Activated naive CD4-positive, alpha-beta T cell treated with anti-CD3 and anti-CD28 coated beads for 36 hours (primary cell): ENCODE measurements at regions of chr14 and their contacts with region 1.

Region 1: GRCh38 chr14:50860478-50861086 is 11.3 kb upstream of the ABHD12B start:
- DNase-seq: peak; percentile 96
- H3K4me3 Mint-ChIP-seq: peak overlapping the region; percentile 80
- H3K27ac Mint-ChIP-seq: peak overlapping the region; percentile 36
- H3K4me1 Mint-ChIP-seq: peaks cover 10% of the 10 kb centered on the region
- H3K27me3 Mint-ChIP-seq: no peaks in the 10 kb centered on the region

Region 2: GRCh38 chr14:50542941-50543418 is 317.6 kb before region 1 on chr14:
- CTCF ChIA-PET with region 1: interaction called, 15 read pairs
- intact Hi-C with region 1: loop called (anchors 1 kb)
- DNase-seq: peak; percentile 54
- H3K4me3 Mint-ChIP-seq: no peak overlapping the region
- H3K27ac Mint-ChIP-seq: no peak overlapping the region
- H3K4me1 Mint-ChIP-seq: peaks cover 8% of the 10 kb centered on the region
- H3K27me3 Mint-ChIP-seq: no peaks in the 10 kb centered on the region

Region 3: GRCh38 chr14:50726372-50727107 is 134.0 kb before region 1 on chr14:
- CTCF ChIA-PET with region 1: interaction called, 8 read pairs
- intact Hi-C with region 1: loop called (anchors 1 kb)
- DNase-seq: peak; percentile 48
- H3K4me3 Mint-ChIP-seq: peak overlapping the region; percentile 3
- H3K27ac Mint-ChIP-seq: peak overlapping the region; percentile 83
- H3K4me1 Mint-ChIP-seq: peaks cover 28% of the 10 kb centered on the region
- H3K27me3 Mint-ChIP-seq: no peaks in the 10 kb centered on the region

Region 4: GRCh38 chr14:50785457-50786063 is 75.0 kb before region 1 on chr14:
- CTCF ChIA-PET with region 1: interaction called, 143 read pairs
- intact Hi-C with region 1: loop called (anchors 1 kb)
- DNase-seq: no peak
- H3K4me3 Mint-ChIP-seq: no peak overlapping the region
- H3K27ac Mint-ChIP-seq: no peak overlapping the region
- H3K4me1 Mint-ChIP-seq: peaks cover 66% of the 10 kb centered on the region
- H3K27me3 Mint-ChIP-seq: no peaks in the 10 kb centered on the region

Region 5: GRCh38 chr14:50823051-50823761 is 37.4 kb before region 1 on chr14:
- CTCF ChIA-PET with region 1: interaction called, 11 read pairs
- intact Hi-C with region 1: loop called (anchors 2 kb)
- DNase-seq: peak; percentile 30
- H3K4me3 Mint-ChIP-seq: peak overlapping the region; percentile 59
- H3K27ac Mint-ChIP-seq: peak overlapping the region; percentile 73
- H3K4me1 Mint-ChIP-seq: peaks cover 89% of the 10 kb centered on the region
- H3K27me3 Mint-ChIP-seq: no peaks in the 10 kb centered on the region

Region 6: GRCh38 chr14:51014086-51014485 is 153.5 kb after region 1 on chr14:
- CTCF ChIA-PET with region 1: no interaction called
- intact Hi-C with region 1: no loop called
- DNase-seq: no peak
- H3K4me3 Mint-ChIP-seq: no peak overlapping the region
- H3K27ac Mint-ChIP-seq: no peak overlapping the region
- H3K4me1 Mint-ChIP-seq: no peaks in the 10 kb centered on the region
- H3K27me3 Mint-ChIP-seq: no peaks in the 10 kb centered on the region

Region 7: DNA sequence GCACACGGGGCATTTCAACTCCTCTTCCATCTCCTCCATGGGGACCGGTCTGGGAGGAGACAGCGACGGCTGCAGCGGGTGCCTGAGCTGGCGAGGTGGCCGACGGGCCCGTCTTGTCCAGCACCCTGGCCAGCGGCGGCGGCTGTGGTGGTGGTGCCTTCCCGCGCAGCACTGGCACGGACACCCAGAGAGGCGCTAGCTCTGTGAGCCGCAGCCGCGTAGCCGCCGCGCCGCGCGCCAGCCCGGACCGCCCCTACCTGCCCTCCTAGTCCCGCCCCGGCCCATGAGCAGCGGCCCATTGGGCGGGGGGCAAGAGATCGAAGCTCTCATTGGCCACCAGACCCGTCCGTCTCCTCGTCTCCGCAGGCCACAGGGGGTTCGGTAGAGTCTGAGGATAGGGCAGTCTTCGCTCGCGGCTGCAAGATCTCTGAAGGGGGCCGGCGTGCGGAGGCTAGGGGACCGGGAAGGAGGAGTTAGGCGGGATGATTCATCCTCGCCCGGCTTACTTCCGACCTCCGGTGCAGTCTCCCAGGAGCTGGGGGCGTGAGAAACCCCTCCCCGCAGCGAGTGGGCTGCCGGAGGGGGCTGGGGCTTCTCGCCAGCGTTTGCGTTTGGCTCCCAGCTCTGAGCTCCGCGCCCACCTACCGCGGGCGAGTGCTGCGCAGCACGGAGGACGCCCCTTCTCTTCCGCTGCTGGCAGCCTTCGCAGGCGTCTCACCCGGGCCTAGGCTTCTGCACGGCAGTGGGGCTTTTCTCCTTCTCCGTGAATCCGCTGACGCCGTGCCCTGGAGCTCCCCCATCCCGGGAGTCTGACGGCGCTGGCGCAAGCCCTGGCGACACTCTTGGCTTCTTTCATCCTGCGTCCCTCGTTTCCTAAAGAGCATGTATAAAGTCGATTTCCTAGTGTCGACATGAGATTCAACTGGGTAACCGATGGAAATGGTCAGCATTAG is 234.6 kb after region 1 on chr14 and contains the start of gene TRIM9:
- CTCF ChIA-PET with region 1: no interaction called
- intact Hi-C with region 1: loop called (anchors 5 kb)
- DNase-seq: peak; percentile 95
- H3K4me3 Mint-ChIP-seq: peak within 1 kb of the TSS; percentile 86
- H3K27ac Mint-ChIP-seq: peak within 1 kb of the TSS; percentile 65
- H3K4me1 Mint-ChIP-seq: peaks cover 12% of the 10 kb centered on the region
- H3K27me3 Mint-ChIP-seq: peaks cover 13% of the 10 kb centered on the region
- total RNA-seq, gene TRIM9: 0.76 to 1.1 TPM